ENCODE measurements at regions of chr2 and their contacts with region 1.

Region 1: DNA sequence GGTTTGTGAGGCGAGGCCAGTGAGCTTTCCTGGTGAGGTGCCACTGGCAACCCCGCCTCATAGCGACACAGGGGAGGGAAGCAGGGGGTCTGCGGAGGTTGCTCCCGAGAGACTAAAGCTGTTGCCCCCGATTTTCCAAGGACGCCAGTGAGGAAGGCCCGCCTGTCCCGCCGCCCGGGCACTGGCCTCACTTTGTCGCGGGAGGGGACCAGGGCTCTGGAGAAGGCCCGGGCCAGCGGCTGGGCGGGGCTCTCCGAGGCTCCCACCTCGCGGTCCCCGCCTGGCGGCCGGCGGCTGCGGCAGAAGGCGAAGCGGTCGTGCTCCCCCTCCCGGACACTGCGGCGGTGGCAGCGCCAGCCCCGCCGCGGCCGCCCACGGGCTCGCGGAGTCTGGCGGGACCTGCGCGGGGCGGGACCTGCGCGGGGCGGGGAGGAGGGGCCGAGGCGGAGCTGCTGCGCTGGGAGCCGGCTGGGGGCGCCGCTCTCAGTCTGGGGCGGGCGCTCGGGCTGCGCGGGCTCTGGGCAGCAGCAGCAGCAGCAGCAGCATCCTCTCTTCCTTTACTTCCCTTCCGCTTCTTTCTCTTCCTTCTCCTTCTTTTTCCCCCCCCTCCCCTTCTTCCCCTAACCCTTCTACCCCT is at the start of gene MAP2:
- DNase-seq: peak; percentile 85 to 96 (median 92)
- ATAC-seq: peak; percentile 92 to 97 (median 96)
- H3K4me3 ChIP-seq: peak within 1 kb of the TSS; percentile 55 to 72 (median 58)
- H3K27ac ChIP-seq: peak within 1 kb of the TSS in 3 of 4 donors; percentile 39 to 69 (median 68)
- H3K4me1 ChIP-seq: peaks cover 0 to 5% (median 4%) of the 10 kb centered on the region in 3 donors
- H3K27me3 ChIP-seq: no peaks in the 10 kb centered on the region
- CTCF ChIP-seq: peak; percentile 86 to 95 (median 93)
- total RNA-seq, gene MAP2: 9.2 to 23.9 (median 12.2) TPM

Region 2: GRCh38 chr2:209334198-209335017 is 89.3 kb before region 1 on chr2:
- intact Hi-C with region 1: loop called in 1 of 3 experiments (anchors 5 kb)
- DNase-seq: peak; percentile 31 to 71 (median 44)
- ATAC-seq: peak; percentile 82 to 98 (median 94)
- H3K4me3 ChIP-seq: no peak overlapping the region
- H3K27ac ChIP-seq: no peak overlapping the region
- H3K4me1 ChIP-seq: peaks cover 0 to 13% (median 8%) of the 10 kb centered on the region in 3 donors
- H3K27me3 ChIP-seq: no peaks in the 10 kb centered on the region
- CTCF ChIP-seq: peak; percentile 74 to 90 (median 85)

Region 3: DNA sequence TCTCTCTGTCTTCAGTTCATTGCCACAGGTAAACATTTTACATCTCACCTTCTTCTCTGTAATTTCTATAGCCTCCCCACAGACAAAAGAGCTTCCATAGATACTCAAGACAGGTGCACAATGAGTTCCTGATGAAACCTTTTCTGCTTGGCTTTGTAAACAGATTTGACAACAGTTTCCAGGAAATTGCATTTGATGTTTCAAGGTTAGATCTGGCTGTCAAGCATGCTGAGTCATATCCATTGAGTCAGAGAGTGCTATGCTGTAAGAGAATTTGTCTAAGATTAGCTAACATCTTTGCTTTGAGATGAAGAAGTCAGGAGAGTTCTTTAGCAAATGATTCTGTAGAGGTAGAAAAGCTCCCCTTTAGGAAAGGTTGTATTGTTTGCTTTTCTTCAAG is 40.5 kb before region 1 on chr2:
- intact Hi-C with region 1: no loop called
- DNase-seq: no peak
- ATAC-seq: peak; percentile 50 to 92 (median 78)
- H3K4me3 ChIP-seq: no peak overlapping the region
- H3K27ac ChIP-seq: peak overlapping the region in 2 of 4 donors; percentile 43 to 66
- H3K4me1 ChIP-seq: peaks cover 0 to 8% (median 0%) of the 10 kb centered on the region in 3 donors
- H3K27me3 ChIP-seq: no peaks in the 10 kb centered on the region
- CTCF ChIP-seq: no peak

Region 4: GRCh38 chr2:209673811-209674210 is 250.1 kb after region 1 on chr2:
- intact Hi-C with region 1: no loop called
- DNase-seq: no peak
- ATAC-seq: no peak
- H3K4me3 ChIP-seq: no peak overlapping the region
- H3K27ac ChIP-seq: no peak overlapping the region
- H3K4me1 ChIP-seq: no peaks in the 10 kb centered on the region
- H3K27me3 ChIP-seq: no peaks in the 10 kb centered on the region
- CTCF ChIP-seq: no peak